ENCODE measurements at regions of chr1 and their contacts with region 1.

Region 1: GRCh38 chr1:110766025-110766647 is 91.4 kb upstream of the KCNA3 start:
- DNase-seq: peak; percentile 67
- ATAC-seq: peak; percentile 85
- H3K4me3 Mint-ChIP-seq: peak overlapping the region; percentile 33
- H3K27ac Mint-ChIP-seq: peak overlapping the region; percentile 44
- H3K4me1 Mint-ChIP-seq: peaks cover 14% of the 10 kb centered on the region
- H3K27me3 Mint-ChIP-seq: peaks cover 30% of the 10 kb centered on the region

Region 2: DNA sequence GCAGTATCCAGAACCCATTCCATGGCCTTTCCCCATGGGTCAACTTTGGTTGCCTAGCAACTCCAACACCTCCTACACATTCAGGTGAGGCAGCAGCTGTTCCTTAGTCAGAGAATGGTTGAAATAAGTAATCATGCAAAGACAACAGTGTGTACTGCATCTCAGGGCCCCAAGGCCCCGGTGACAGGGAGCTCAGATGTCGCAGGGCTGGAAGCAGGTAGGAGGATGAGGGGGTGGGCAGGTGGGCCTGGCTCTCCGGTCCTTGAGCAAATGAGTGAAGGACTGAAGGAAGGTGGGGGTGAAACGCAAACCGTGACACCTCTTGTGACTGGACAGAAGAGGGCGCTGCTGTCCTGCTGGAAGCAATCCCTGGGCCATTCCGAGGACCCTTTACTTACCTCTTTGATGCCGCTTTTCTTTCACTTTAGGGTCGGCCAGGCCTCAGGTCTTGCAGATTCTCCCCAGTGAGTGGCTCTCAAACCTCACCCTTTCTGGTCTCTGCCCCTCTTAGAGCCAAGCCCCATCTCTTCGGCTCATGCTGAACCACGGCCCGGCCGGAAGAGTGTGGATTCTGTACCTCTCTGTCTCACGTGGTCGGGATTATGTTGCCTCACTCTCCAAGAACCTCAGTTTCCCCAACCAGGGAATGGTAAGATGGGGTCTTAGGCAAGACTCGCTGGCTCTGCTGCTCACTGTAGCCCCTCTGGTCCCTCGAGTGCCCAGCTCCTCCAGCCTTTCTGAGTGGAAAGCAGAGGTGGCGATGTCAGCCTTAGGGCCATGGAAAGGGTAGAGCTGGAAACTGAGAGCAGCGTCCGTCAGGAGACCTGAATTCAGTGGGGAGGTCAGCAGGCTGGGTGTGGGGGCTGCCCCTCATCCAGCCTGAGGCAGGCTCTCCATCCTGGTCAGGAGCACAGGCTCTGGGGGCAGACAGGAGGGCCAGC is 241.6 kb before region 1 on chr1:
- CTCF ChIA-PET with region 1: interaction called, 11 read pairs
- DNase-seq: peak; percentile 69
- ATAC-seq: peak; percentile 80
- H3K4me3 Mint-ChIP-seq: peak overlapping the region; percentile 30
- H3K27ac Mint-ChIP-seq: no peak overlapping the region
- H3K4me1 Mint-ChIP-seq: no peaks in the 10 kb centered on the region
- H3K27me3 Mint-ChIP-seq: peaks cover 52% of the 10 kb centered on the region

Region 3: DNA sequence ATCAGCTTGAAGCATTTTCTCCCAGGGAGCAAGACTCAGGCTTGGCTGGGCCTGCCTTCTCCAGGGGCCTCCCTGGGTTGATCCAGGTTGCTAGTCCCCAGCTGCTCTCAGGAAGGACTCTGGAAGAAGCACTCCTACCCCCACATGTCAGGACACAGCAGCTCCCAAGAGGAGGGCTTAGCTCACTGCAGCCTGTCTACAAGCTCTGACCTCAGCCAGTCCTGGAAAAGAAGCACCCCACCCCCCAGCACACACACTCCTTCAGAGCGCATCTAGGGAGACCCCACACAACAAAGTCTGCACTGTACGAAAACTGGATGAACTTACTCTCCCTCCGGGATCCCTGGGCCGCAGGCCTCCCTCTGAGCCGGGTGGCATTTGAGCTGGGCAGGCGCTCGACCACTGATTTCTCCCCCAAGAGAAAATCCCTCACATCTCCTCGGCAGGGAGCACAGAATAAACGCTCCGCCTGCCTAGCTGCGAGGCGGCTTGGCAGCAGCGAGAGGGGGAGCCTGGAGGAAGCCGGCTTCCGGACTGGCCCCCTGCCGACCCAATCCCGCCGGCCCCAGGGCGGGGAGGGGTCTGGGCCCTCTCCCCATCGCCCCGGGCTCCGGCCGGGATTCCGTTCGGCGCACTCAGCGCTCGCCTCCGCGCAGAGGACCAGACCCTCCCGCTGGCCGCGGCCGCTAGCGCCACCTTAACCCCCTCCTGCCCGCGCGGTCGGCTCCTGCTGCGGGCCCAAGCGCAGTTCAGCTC is 160.1 kb before region 1 on chr1 and contains the start of gene KCNA2:
- CTCF ChIA-PET with region 1: interaction called, 11 read pairs
- DNase-seq: no peak
- ATAC-seq: peak; percentile 46
- H3K4me3 Mint-ChIP-seq: peak within 1 kb of the TSS; percentile 74
- H3K27ac Mint-ChIP-seq: no peak within 1 kb of the TSS
- H3K4me1 Mint-ChIP-seq: peaks cover 22% of the 10 kb centered on the region
- H3K27me3 Mint-ChIP-seq: peaks cover 42% of the 10 kb centered on the region
- total RNA-seq, gene KCNA2: 2.4 to 3.7 TPM

Region 4: GRCh38 chr1:110639724-110640386 is 126.3 kb before region 1 on chr1:
- CTCF ChIA-PET with region 1: interaction called, 11 read pairs
- DNase-seq: no peak
- ATAC-seq: no peak
- H3K4me3 Mint-ChIP-seq: no peak overlapping the region
- H3K27ac Mint-ChIP-seq: peak overlapping the region; percentile 30
- H3K4me1 Mint-ChIP-seq: peaks cover 71% of the 10 kb centered on the region
- H3K27me3 Mint-ChIP-seq: no peaks in the 10 kb centered on the region

Region 5: GRCh38 chr1:110674337-110675059 is 91.6 kb before region 1 on chr1 and contains the start of gene KCNA3:
- CTCF ChIA-PET with region 1: interaction called, 29 read pairs
- DNase-seq: peak; percentile 83
- ATAC-seq: peak; percentile 43
- H3K4me3 Mint-ChIP-seq: peak within 1 kb of the TSS; percentile 100
- H3K27ac Mint-ChIP-seq: peak within 1 kb of the TSS; percentile 96
- H3K4me1 Mint-ChIP-seq: peaks cover 14% of the 10 kb centered on the region
- H3K27me3 Mint-ChIP-seq: no peaks in the 10 kb centered on the region
- total RNA-seq, gene KCNA3: 59.8 to 95.2 TPM

Region 6: GRCh38 chr1:110780600-110781484 is 14.7 kb after region 1 on chr1:
- CTCF ChIA-PET with region 1: interaction called, 137 read pairs
- DNase-seq: peak; percentile 86
- ATAC-seq: peak; percentile 78
- H3K4me3 Mint-ChIP-seq: no peak overlapping the region
- H3K27ac Mint-ChIP-seq: no peak overlapping the region
- H3K4me1 Mint-ChIP-seq: peaks cover 32% of the 10 kb centered on the region
- H3K27me3 Mint-ChIP-seq: peaks cover 5% of the 10 kb centered on the region